Activated CD4-positive, alpha-beta T cell treated with anti-CD3 and anti-CD28 coated beads, Interleukin-2, amount 10 ng/mL, durations not matched to agents 24 days and 14 days (primary cell): ENCODE measurements at regions of chr1 and their contacts with region 1.

Region 1: DNA sequence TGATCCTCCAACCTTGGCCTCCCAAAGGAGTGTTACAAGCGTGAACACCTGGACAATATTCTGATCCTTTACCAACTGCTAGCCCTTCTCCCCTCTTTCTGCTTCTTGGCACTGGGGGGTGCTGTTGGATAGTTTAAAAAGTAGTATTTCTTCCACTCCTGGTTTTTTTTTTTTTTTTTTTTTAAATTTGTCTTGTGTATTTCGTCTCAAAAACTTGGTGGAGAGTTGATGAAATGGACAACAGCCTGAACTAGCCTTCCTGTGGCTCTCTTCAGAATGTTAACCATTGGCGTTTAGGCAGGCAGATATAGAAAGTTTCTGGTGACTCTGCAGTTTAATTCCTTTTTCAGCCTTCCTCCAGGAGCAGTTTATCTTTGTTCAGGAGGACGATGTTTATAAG is 69.7 kb upstream of the USP24 start:
- DNase-seq: peak; percentile 63
- H3K4me3 Mint-ChIP-seq: no peak overlapping the region
- H3K27ac Mint-ChIP-seq: no peak overlapping the region
- H3K4me1 Mint-ChIP-seq: peaks cover 14% of the 10 kb centered on the region
- H3K27me3 Mint-ChIP-seq: peaks cover 9% of the 10 kb centered on the region

Region 2: DNA sequence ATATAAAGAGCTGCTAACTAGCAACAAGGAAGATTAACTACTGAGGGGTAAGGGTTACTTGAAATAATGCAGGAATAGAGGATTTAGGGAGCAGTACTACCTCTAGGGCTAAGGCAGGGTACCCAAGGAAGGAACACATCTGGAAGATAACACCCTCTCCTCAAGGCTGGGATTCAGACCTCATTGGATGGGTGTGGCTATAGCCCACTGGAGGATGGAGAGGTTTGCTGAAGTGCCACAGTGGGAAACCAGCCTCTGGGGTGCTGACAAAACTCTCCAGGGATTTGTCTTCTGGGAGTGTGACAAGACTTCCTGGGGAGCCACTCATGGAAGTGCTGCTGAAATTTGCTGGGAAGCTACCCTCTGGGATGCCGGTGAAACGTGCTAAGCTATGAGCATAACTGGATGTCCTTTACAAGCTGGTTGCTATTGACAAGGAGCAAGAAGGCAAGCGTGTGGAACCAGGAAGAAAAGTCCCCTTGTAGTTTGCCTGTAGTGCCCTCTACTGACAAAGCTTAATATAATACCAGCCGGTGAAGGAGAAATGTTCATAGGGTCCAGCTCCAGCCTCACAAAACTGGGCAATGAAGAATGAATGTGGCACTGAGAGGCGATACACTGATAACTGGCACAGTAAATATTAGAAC is 53.1 kb after region 1 on chr1:
- intact Hi-C with region 1: loop called (anchors 1 kb)
- DNase-seq: peak; percentile 72
- H3K4me3 Mint-ChIP-seq: no peak overlapping the region
- H3K27ac Mint-ChIP-seq: no peak overlapping the region
- H3K4me1 Mint-ChIP-seq: peaks cover 7% of the 10 kb centered on the region
- H3K27me3 Mint-ChIP-seq: peaks cover 5% of the 10 kb centered on the region